ENCODE measurements at regions of chr13 and their contacts with region 1.

Region 1: DNA sequence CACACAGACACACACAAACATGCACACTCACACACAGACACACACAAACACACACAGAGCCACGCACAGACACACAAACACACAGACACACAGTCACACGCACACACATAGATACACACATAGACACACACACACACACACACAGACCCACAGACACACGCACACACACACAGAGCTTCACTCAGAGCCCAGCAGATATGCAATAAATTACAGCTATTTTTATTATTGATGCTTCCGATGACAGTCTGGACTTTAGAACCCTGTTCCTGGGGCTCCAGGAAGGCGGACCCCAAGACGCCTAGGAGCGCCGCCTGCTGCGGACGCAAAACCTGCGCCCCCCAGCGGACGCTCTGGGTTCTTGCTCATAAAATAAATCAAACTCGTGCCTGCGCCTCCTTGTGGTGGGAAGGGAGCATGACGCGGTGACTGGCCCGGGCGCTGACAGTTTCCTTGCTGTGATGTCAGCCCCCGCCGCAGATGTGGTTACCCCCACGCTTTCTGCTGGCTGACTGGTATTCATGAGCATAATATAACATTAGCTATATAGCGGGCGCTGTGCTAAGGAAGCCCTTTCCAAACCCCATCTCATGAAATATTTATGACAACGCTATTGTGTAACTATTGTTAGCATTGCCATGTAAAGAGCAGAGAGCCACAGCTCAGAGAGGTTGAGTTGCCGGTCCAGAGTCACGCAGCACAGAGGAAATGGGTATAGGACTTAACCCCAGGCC is 64.4 kb upstream of the TM9SF2 start:
- DNase-seq: peak; percentile 87
- ATAC-seq: peak; percentile 59 to 66

Region 2: GRCh38 chr13:99165753-99166587 is 270.9 kb before region 1 on chr13:
- intact Hi-C with region 1: loop called in 1 of 2 experiments (anchors 2 kb)
- DNase-seq: no peak
- ATAC-seq: no peak

Region 3: GRCh38 chr13:99176309-99177276 is 260.3 kb before region 1 on chr13:
- intact Hi-C with region 1: loop called (anchors 2 to 5 kb)
- DNase-seq: peak; percentile 76
- ATAC-seq: peak; percentile 92

Region 4: DNA sequence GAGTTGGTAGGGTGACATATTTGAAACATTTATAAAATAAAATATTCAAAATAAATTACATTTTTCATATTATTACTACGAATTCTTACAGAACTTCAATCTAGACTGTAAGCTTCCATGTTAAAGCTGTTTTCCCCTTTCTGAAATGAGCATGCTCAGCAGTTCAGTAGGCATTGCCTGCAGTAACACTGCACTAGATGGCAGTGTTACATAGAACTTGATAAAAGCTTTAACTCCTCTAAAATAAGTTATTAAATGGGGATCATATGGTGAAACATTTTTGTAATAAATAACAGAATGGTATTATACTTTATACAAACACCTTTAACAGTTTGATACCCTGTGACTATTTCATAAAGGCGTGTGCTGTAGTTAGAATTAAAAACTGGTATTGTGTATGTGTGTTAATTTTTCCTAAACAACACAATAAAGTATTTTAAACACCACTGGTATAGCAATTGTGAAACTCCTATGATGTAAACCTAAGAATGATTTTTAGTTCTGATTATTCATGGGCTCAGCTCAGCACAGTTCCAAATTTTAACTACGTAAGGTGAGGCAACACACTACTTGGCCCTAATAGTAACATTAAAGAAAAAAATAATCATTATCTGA is 167.1 kb before region 1 on chr13:
- intact Hi-C with region 1: loop called (anchors 1 to 5 kb)
- DNase-seq: no peak
- ATAC-seq: peak; percentile 64 to 73

Region 5: GRCh38 chr13:99386911-99387788 is 49.7 kb before region 1 on chr13:
- intact Hi-C with region 1: loop called in 1 of 2 experiments (anchors 5 kb)
- DNase-seq: peak; percentile 49
- ATAC-seq: no peak

Region 6: GRCh38 chr13:99606324-99607066 is 169.6 kb after region 1 on chr13:
- intact Hi-C with region 1: loop called (anchors 5 to 10 kb)
- DNase-seq: peak; percentile 89
- ATAC-seq: peak; percentile 97 to 98